ENCODE measurements at regions of chr3 and their contacts with region 1.

Region 1: GRCh38 chr3:53709860-53710674 is 136.2 kb downstream of the CHDH start:
- DNase-seq: peak; percentile 81
- ATAC-seq: peak; percentile 83
- H3K4me3 Mint-ChIP-seq: no peak overlapping the region
- H3K27ac Mint-ChIP-seq: no peak overlapping the region
- H3K4me1 Mint-ChIP-seq: peaks cover 4% of the 10 kb centered on the region
- H3K27me3 Mint-ChIP-seq: peaks cover 2% of the 10 kb centered on the region

Region 2: GRCh38 chr3:53219895-53220483 is 490.1 kb before region 1 on chr3:
- CTCF ChIA-PET with region 1: no interaction called
- POLR2A ChIA-PET with region 1: no interaction called
- intact Hi-C with region 1: loop called in 1 of 2 experiments (anchors 1 kb)
- DNase-seq: peak; percentile 93
- ATAC-seq: peak; percentile 99
- H3K4me3 Mint-ChIP-seq: no peak overlapping the region
- H3K27ac Mint-ChIP-seq: no peak overlapping the region
- H3K4me1 Mint-ChIP-seq: peaks cover 2% of the 10 kb centered on the region
- H3K27me3 Mint-ChIP-seq: no peaks in the 10 kb centered on the region

Region 3: DNA sequence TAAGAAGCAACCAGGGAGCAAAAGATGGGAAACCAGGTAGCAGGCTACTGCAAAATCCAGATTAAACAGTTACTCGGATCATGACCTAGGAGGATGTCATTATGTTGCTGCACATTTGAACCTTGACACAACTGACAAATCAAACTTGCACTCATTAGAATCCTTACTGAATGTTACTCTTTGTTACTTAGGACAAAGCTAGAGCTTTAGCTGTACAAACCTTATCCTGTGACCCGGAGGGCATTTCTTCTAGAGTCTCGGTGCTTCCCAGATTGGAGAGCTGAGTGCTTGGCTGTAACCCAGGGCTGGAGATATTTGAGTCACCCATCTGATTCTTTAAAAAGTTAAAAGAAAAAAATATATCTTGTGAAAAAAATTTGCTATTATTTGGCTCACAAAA is 406.1 kb before region 1 on chr3:
- CTCF ChIA-PET with region 1: no interaction called
- POLR2A ChIA-PET with region 1: no interaction called
- intact Hi-C with region 1: loop called (anchors 2 to 5 kb)
- DNase-seq: no peak
- ATAC-seq: no peak
- H3K4me3 Mint-ChIP-seq: no peak overlapping the region
- H3K27ac Mint-ChIP-seq: no peak overlapping the region
- H3K4me1 Mint-ChIP-seq: no peaks in the 10 kb centered on the region
- H3K27me3 Mint-ChIP-seq: no peaks in the 10 kb centered on the region

Region 4: DNA sequence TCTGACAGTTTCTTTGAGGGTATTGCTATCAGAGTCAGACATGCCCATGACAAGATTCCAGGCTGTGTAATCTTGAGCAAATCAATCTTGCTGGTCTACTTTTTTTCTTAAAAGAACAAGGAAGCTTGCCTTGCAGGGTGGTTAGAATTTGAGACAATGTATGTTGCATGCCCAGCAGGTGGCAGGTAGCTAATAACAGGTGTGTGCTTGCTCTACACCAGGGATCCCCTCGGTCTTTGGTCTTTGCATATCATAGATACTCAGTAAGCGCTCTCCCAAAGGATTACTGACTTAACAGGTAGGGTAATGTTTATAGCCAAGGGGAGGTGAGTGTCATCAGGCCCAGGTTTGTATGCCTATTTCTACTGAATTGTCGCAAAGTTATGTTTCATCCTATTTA is 178.3 kb before region 1 on chr3:
- CTCF ChIA-PET with region 1: no interaction called
- POLR2A ChIA-PET with region 1: no interaction called
- intact Hi-C with region 1: loop called in 1 of 2 experiments (anchors 5 kb)
- DNase-seq: no peak
- ATAC-seq: no peak
- H3K4me3 Mint-ChIP-seq: no peak overlapping the region
- H3K27ac Mint-ChIP-seq: no peak overlapping the region
- H3K4me1 Mint-ChIP-seq: no peaks in the 10 kb centered on the region
- H3K27me3 Mint-ChIP-seq: peaks cover 23% of the 10 kb centered on the region

Region 5: DNA sequence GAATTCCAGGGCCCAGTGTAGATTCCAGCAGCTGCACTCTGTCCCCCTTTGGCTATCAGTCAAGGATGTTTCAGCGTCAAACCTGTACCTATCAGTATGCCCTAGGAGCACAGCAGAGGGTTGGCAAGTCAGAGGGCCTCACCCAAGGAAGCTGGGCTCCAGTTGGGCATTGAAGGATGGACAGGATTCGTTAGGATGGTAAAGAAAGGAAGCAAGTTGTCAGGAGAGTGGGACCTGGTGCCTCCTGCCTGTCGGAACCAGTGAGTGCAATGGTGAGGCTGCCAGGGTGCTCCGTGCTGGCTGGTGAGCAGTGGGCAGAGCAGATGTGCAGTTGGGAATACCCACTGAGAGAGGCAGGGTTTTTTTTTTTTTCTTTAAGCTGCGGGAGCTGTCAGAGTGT is 21.1 kb before region 1 on chr3:
- CTCF ChIA-PET with region 1: no interaction called
- POLR2A ChIA-PET with region 1: no interaction called
- intact Hi-C with region 1: no loop called
- DNase-seq: no peak
- ATAC-seq: no peak
- H3K4me3 Mint-ChIP-seq: no peak overlapping the region
- H3K27ac Mint-ChIP-seq: no peak overlapping the region
- H3K4me1 Mint-ChIP-seq: no peaks in the 10 kb centered on the region
- H3K27me3 Mint-ChIP-seq: peaks cover 4% of the 10 kb centered on the region